ENCODE measurements at regions of chr1 and their contacts with region 1.

Region 1: GRCh38 chr1:59879574-59879973 is 47.0 kb downstream of the CYP2J2 start:
- DNase-seq: peak; percentile 71
- H3K4me3 Mint-ChIP-seq: no peak overlapping the region
- H3K27ac Mint-ChIP-seq: no peak overlapping the region
- H3K4me1 Mint-ChIP-seq: no peaks in the 10 kb centered on the region
- H3K27me3 Mint-ChIP-seq: peaks cover 7% of the 10 kb centered on the region
- CTCF ChIP-seq: no peak

Region 2: GRCh38 chr1:59805564-59805963 is 74.0 kb before region 1 on chr1:
- CTCF ChIA-PET with region 1: no interaction called
- POLR2A ChIA-PET with region 1: no interaction called
- intact Hi-C with region 1: no loop called
- DNase-seq: no peak
- H3K4me3 Mint-ChIP-seq: no peak overlapping the region
- H3K27ac Mint-ChIP-seq: no peak overlapping the region
- H3K4me1 Mint-ChIP-seq: no peaks in the 10 kb centered on the region
- H3K27me3 Mint-ChIP-seq: no peaks in the 10 kb centered on the region
- CTCF ChIP-seq: no peak

Region 3: DNA sequence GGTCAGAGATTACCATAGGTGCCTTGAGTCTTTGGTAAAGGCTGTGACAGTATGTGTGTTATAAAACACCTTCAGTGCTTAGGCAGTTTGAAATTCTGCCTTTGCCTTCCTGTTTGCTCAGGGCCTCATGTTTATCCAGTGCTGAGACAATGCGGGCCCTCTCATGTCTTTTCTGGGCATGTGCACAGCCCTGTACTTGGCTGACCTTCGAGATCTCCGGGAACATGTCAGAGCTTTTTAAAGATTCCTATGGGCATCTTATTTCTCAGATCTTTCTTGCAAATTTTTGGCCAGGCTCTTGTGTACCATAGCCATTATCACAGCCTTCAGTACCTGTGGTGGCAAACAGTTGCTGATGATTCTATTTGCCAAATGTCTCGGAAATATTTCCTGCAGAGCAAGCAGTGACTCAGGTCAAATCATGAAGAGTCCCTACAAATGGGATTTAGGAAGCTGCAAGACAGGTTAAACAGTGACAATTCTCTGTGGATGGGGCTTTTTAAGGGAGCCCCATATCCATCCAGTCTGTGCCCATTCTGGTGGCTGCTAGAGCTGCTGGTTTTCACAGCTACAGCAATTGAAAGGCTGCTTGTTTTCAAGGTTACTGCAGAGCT is 22.7 kb before region 1 on chr1:
- CTCF ChIA-PET with region 1: interaction called, 16 read pairs
- POLR2A ChIA-PET with region 1: no interaction called
- intact Hi-C with region 1: no loop called
- DNase-seq: no peak
- H3K4me3 Mint-ChIP-seq: no peak overlapping the region
- H3K27ac Mint-ChIP-seq: no peak overlapping the region
- H3K4me1 Mint-ChIP-seq: no peaks in the 10 kb centered on the region
- H3K27me3 Mint-ChIP-seq: no peaks in the 10 kb centered on the region
- CTCF ChIP-seq: no peak

Region 4: GRCh38 chr1:59892841-59893811 is 13.6 kb after region 1 on chr1:
- CTCF ChIA-PET with region 1: interaction called, 25 read pairs
- POLR2A ChIA-PET with region 1: interaction called, 3 read pairs
- intact Hi-C with region 1: no loop called
- DNase-seq: no peak
- H3K4me3 Mint-ChIP-seq: no peak overlapping the region
- H3K27ac Mint-ChIP-seq: no peak overlapping the region
- H3K4me1 Mint-ChIP-seq: no peaks in the 10 kb centered on the region
- H3K27me3 Mint-ChIP-seq: no peaks in the 10 kb centered on the region
- CTCF ChIP-seq: no peak

Region 5: DNA sequence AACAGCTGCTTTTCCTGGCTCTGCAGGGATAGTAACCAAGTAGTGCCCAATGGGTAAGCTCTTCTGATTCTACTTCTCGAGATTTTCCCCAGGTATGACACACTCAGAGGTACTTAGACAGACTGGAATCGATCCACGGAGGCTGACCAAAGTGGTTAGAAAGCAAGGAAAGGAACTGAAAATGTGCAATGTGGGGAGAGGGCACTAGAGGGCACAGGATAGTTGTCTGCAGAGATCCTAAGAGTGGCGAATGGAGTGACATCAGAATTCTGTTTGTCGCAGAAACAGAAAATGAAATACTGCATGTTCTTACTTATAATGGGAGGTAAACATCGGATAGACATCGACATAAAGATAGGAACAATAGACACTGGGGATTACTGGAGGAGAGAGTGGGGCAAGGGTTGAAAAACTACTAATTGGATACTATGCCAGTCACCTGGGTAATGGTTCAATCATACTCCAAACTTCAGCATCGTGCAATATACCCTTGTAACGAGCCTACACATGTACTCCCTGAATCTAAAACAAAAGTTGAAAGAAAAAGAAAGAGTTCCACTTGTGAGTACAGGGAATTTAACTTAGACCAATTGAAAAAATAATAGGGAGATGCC is 23.7 kb after region 1 on chr1:
- CTCF ChIA-PET with region 1: interaction called, 15 read pairs
- POLR2A ChIA-PET with region 1: no interaction called
- intact Hi-C with region 1: no loop called
- DNase-seq: peak; percentile 44
- H3K4me3 Mint-ChIP-seq: no peak overlapping the region
- H3K27ac Mint-ChIP-seq: no peak overlapping the region
- H3K4me1 Mint-ChIP-seq: peaks cover 6% of the 10 kb centered on the region
- H3K27me3 Mint-ChIP-seq: peaks cover 13% of the 10 kb centered on the region
- CTCF ChIP-seq: peak; percentile 45

Region 6: DNA sequence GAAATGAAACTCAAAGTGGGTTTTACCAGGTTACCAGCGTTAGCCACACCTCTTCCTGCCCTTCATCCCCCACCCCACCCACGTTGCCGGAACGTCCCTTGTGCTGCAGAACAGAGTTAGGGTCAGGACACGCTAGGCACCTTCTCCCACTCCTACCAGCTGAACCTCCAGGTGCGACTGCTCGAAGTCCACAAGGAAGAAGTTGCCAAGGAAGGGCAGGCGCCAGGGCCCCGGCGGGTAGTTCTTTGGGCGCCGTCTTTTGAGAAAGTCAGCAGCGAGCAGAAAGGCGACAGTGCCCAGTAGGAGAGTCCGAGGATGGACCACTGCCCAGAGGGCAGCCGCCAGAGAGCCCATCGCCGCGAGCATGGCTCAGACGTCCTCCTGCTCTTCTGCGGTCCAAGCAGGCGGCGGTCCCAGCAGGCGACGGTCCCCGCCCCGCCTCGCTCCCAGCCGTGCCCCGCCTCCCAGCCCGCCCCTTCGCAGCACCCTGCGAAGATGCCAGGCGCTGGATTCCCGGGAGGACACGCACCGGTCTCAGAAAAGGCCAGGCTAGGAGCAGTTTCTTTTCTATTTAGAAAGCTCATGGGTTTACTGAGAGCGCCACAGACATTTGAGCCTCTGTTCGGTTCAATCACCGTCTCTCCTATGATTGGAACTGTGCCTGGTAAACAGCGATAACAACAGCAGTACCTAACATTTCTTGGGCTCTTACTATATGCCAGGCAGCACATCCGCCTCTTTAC is 47.0 kb after region 1 on chr1 and contains the start of gene CYP2J2:
- CTCF ChIA-PET with region 1: interaction called, 10 read pairs
- POLR2A ChIA-PET with region 1: no interaction called
- intact Hi-C with region 1: no loop called
- DNase-seq: peak; percentile 59
- H3K4me3 Mint-ChIP-seq: peak within 1 kb of the TSS; percentile 71
- H3K27ac Mint-ChIP-seq: no peak within 1 kb of the TSS
- H3K4me1 Mint-ChIP-seq: no peaks in the 10 kb centered on the region
- H3K27me3 Mint-ChIP-seq: peaks cover 57% of the 10 kb centered on the region
- CTCF ChIP-seq: no peak
- total RNA-seq, gene CYP2J2: 0.25 and 0.42 TPM in 2 replicates

Region 7: DNA sequence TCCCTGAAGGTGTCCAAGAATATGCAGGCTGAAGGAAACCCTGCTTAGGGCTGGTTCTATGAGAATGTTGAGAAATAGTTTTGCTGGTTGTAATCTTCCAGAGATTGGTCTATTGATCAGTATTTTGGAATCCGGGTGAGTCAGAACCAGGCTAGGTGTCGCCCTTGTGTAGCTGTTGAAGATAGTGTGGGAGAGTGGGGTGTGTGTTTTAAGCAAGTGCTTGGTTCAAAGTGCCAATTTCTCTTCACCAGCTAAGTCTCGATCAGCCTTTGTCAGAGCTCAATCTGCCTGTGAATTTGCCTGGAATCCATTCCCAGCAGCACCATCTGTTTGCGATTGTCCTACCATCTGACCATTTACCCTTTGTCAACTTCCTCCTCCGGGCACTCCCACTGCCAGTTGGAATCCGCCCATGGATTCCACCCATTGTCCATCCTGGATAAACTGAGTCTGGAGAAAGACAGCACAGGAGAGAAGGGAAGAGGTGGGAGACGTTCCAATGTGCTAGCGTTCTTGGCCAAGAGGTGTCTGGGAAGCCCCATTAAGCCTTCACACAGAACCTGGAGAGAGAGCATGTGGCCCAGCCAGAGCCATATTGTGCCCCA is 106.4 kb after region 1 on chr1:
- CTCF ChIA-PET with region 1: no interaction called
- POLR2A ChIA-PET with region 1: no interaction called
- intact Hi-C with region 1: no loop called
- DNase-seq: no peak
- H3K4me3 Mint-ChIP-seq: no peak overlapping the region
- H3K27ac Mint-ChIP-seq: no peak overlapping the region
- H3K4me1 Mint-ChIP-seq: no peaks in the 10 kb centered on the region
- H3K27me3 Mint-ChIP-seq: peaks cover 54% of the 10 kb centered on the region
- CTCF ChIP-seq: no peak

Region 8: GRCh38 chr1:60502506-60502905 is 622.9 kb after region 1 on chr1:
- CTCF ChIA-PET with region 1: no interaction called
- POLR2A ChIA-PET with region 1: no interaction called
- intact Hi-C with region 1: no loop called
- DNase-seq: no peak
- H3K4me3 Mint-ChIP-seq: no peak overlapping the region
- H3K27ac Mint-ChIP-seq: no peak overlapping the region
- H3K4me1 Mint-ChIP-seq: peaks cover 6% of the 10 kb centered on the region
- H3K27me3 Mint-ChIP-seq: peaks cover 12% of the 10 kb centered on the region
- CTCF ChIP-seq: no peak

Measured in MCF 10A (cell line).